ENCODE measurements at regions of chr14 and their contacts with region 1.

Region 1: GRCh38 chr14:77067632-77068514 is 30.2 kb upstream of the CIPC start:
- DNase-seq: peak; percentile 84
- H3K4me3 ChIP-seq: no peak overlapping the region; a peak in 1 of 4 replicates
- H3K27ac ChIP-seq: no peak overlapping the region
- H3K4me1 ChIP-seq: peaks cover 0 to 14% of the 10 kb centered on the region in 2 experiments; a peak in 2 of 4 replicates
- H3K27me3 ChIP-seq: no peaks in the 10 kb centered on the region
- CTCF ChIP-seq: peak; percentile 92
- EP300 ChIP-seq: no peak
- RAD21 ChIP-seq: peak; percentile 95

Region 2: DNA sequence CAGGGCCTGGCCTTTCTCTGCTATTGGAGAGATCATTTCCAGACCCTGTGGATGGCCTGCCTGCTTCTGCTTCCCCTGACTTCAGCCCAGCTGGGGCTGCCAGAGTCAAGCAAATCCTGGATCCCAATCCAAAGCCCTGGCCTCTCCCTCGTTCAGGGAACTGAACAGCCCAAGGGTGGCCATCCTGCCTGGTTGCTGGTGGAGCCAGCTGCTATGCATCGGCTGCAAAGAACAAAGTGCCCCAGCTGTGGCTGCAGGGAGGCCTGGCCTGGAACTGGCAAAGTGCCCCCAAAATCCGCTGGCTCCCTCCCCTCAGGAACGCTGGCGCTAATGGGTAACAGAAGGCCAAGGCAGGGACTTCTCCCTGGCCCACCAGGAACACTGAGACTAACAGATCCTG is 185.2 kb before region 1 on chr14:
- CTCF ChIA-PET with region 1: interaction called, 764 read pairs
- POLR2A ChIA-PET with region 1: no interaction called
- DNase-seq: peak; percentile 59
- H3K4me3 ChIP-seq: no peak overlapping the region
- H3K27ac ChIP-seq: peak overlapping the region in 1 of 2 experiments; percentile 72; a peak in 1 of 4 replicates
- H3K4me1 ChIP-seq: peaks cover 0 to 24% of the 10 kb centered on the region in 2 experiments; a peak in 1 of 4 replicates
- H3K27me3 ChIP-seq: no peaks in the 10 kb centered on the region
- CTCF ChIP-seq: no peak
- EP300 ChIP-seq: no peak
- RAD21 ChIP-seq: peak; percentile 48